ENCODE measurements at regions of chr13 and their contacts with region 1.

Region 1: GRCh38 chr13:102773441-102774215 is at the start of gene TEX30:
- DNase-seq: peak; percentile 78 to 95 (median 91)
- ATAC-seq: peak; percentile 98
- H3K4me3 ChIP-seq: peak within 1 kb of the TSS; percentile 89
- H3K4me3 Mint-ChIP-seq: peak within 1 kb of the TSS; percentile 87 to 97 (median 94)
- H3K27ac ChIP-seq: peak within 1 kb of the TSS; percentile 79
- H3K27ac Mint-ChIP-seq: peak within 1 kb of the TSS; percentile 87 to 97 (median 94)
- H3K4me1 ChIP-seq: peaks cover 2 to 7% of the 10 kb centered on the region in 2 donors
- H3K4me1 Mint-ChIP-seq: peaks cover 15 to 56% (median 46%) of the 10 kb centered on the region in 7 donors
- H3K27me3 ChIP-seq: no peaks in the 10 kb centered on the region
- H3K27me3 Mint-ChIP-seq: no peaks in the 10 kb centered on the region
- total RNA-seq, gene TEX30: 3.7 to 30.8 (median 8.3) TPM

Region 2: DNA sequence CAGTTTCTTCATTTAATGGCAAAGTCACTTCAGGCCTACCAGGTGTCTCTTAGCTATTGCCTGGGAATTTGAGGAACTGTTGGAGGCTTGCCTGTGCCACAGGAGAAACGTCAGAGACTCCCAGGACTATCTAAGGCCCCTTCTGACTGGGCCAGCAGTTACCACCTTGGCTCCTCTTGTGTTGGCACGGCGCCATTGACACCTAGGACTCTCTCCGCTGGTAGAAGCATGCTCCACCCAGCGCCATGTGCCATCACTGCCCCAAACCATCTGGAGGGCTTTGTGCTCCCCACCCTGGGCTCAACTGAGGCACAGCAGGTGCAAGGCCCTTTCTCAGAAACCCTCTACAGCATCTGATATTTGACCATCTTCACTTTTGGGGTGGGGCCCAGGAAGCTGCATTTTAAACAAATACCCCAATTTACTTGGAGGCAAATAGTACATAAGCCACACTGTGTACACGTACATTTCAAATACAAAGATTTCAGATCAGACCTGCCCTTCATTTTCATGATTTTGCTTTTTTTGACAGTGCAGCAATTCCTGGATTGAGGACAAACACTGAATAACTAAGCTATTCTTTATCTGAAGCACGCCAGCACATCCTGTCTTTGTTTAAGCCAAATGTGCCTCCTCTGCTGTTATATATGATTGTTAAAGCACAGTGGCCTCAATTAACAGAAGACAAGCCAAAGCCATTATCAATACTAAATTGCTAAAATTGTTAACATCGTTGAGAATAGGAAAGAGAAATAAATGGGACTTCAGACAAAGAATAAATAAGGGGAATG is 236.7 kb before region 1 on chr13:
- CTCF ChIA-PET with region 1: no interaction called
- POLR2A ChIA-PET with region 1: no interaction called
- intact Hi-C with region 1: no loop called
- DNase-seq: no peak
- ATAC-seq: no peak
- H3K4me3 ChIP-seq: no peak overlapping the region
- H3K4me3 Mint-ChIP-seq: no peak overlapping the region
- H3K27ac ChIP-seq: no peak overlapping the region
- H3K27ac Mint-ChIP-seq: no peak overlapping the region
- H3K4me1 ChIP-seq: no peaks in the 10 kb centered on the region
- H3K4me1 Mint-ChIP-seq: no peaks in the 10 kb centered on the region
- H3K27me3 ChIP-seq: no peaks in the 10 kb centered on the region
- H3K27me3 Mint-ChIP-seq: peaks cover 0 to 19% (median 11%) of the 10 kb centered on the region in 5 donors

Region 3: GRCh38 chr13:102680842-102681740 is 92.5 kb before region 1 on chr13:
- CTCF ChIA-PET with region 1: no interaction called
- POLR2A ChIA-PET with region 1: no interaction called
- intact Hi-C with region 1: loop called (anchors 2 to 5 kb)
- DNase-seq: peak in 5 of 9 donors; percentile 2 to 37 (median 34)
- ATAC-seq: peak; percentile 74
- H3K4me3 ChIP-seq: no peak overlapping the region
- H3K4me3 Mint-ChIP-seq: peak overlapping the region in 2 of 10 donors; percentile 5 to 57
- H3K27ac ChIP-seq: no peak overlapping the region
- H3K27ac Mint-ChIP-seq: peak overlapping the region; percentile 14 to 81 (median 58)
- H3K4me1 ChIP-seq: peaks cover 0 to under 1% of the 10 kb centered on the region in 2 donors
- H3K4me1 Mint-ChIP-seq: peaks cover 14 to 33% (median 21%) of the 10 kb centered on the region in 7 donors
- H3K27me3 ChIP-seq: no peaks in the 10 kb centered on the region
- H3K27me3 Mint-ChIP-seq: no peaks in the 10 kb centered on the region

Region 4: GRCh38 chr13:102724923-102725322 is 48.7 kb before region 1 on chr13:
- CTCF ChIA-PET with region 1: no interaction called
- POLR2A ChIA-PET with region 1: no interaction called
- intact Hi-C with region 1: loop called (anchors 1 to 5 kb)
- DNase-seq: peak in 1 of 9 donors; percentile 6
- ATAC-seq: peak; percentile 54
- H3K4me3 ChIP-seq: no peak overlapping the region
- H3K4me3 Mint-ChIP-seq: no peak overlapping the region
- H3K27ac ChIP-seq: no peak overlapping the region
- H3K27ac Mint-ChIP-seq: no peak overlapping the region
- H3K4me1 ChIP-seq: no peaks in the 10 kb centered on the region
- H3K4me1 Mint-ChIP-seq: peaks cover 0 to 3% (median 0%) of the 10 kb centered on the region in 7 donors
- H3K27me3 ChIP-seq: no peaks in the 10 kb centered on the region
- H3K27me3 Mint-ChIP-seq: peaks cover 8 to 40% (median 26%) of the 10 kb centered on the region in 5 donors

Region 5: DNA sequence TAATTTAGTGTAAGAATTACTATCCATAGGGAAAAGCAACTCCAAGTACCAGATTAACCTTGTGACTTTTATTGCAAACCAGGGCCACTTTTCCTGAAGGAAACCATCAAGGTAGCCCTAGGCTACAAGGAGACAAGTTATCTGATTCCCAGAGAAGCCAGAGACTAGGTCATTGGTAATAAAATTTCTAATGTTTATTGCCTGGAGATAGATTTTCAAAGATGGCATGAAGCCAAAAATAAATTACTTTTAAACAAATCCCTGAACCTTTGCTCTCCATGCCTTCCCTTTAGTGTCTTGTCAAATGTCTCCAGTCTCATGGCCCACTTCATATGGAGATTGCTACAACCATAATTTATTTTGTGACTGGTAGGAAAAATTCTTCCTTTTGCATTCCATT is 902.7 kb after region 1 on chr13:
- CTCF ChIA-PET with region 1: no interaction called
- POLR2A ChIA-PET with region 1: no interaction called
- intact Hi-C with region 1: no loop called
- DNase-seq: no peak
- ATAC-seq: no peak
- H3K4me3 ChIP-seq: no peak overlapping the region
- H3K4me3 Mint-ChIP-seq: no peak overlapping the region
- H3K27ac ChIP-seq: no peak overlapping the region
- H3K27ac Mint-ChIP-seq: no peak overlapping the region
- H3K4me1 ChIP-seq: no peaks in the 10 kb centered on the region
- H3K4me1 Mint-ChIP-seq: no peaks in the 10 kb centered on the region
- H3K27me3 ChIP-seq: no peaks in the 10 kb centered on the region
- H3K27me3 Mint-ChIP-seq: no peaks in the 10 kb centered on the region